Prostate gland (tissue), 2 donors: ENCODE measurements at regions of chr20 and their contacts with region 1.

Region 1: DNA sequence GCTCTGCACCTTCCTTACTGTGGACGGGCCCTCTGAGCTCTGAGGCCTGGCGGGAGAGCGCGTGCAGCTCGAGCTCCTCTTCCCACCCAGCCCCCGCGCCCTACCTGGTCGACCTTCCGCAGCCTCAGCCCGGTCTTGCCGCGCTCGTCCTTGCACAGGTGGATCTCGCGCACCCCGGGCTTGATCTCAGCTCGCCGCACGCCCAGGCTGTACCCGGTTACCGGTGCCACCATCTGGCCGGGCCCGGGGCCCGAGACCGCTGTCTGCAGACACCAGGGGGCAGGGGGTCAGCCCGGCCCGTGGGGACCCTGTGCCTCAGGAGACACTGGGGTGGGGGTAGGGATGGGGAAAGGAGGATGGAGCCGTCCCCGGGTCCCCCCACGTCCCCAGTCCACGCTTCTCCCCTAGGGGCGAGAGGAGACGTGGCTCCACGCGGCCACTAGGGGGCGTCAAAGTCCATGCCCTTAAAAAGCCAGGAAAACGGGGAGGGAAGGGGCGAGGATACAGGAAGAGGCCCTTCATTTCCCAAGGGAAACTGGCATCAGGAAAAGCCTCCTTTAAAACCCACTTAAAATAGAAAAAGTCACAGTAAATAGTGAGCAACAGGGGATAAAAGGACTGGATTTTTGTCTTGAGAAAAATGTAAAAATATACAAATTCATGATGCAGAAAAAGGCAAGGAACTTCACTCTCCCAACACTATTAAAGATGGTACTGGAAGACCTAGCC is 15.5 kb downstream of the SDCBP2 start:
- DNase-seq: peak; percentile 46
- H3K4me3 ChIP-seq: peak overlapping the region in 1 of 2 donors; percentile 13
- H3K27ac ChIP-seq: no peak overlapping the region
- H3K4me1 ChIP-seq: no peaks in the 10 kb centered on the region
- H3K27me3 ChIP-seq: no peaks in the 10 kb centered on the region
- CTCF ChIP-seq: peak; percentile 93 to 100 (median 96)
- POLR2A ChIP-seq: no peak

Region 2: GRCh38 chr20:1247689-1248088 is 65.7 kb before region 1 on chr20:
- intact Hi-C with region 1: no loop called
- DNase-seq: no peak
- H3K4me3 ChIP-seq: no peak overlapping the region
- H3K27ac ChIP-seq: no peak overlapping the region
- H3K4me1 ChIP-seq: no peaks in the 10 kb centered on the region
- H3K27me3 ChIP-seq: no peaks in the 10 kb centered on the region
- CTCF ChIP-seq: no peak
- POLR2A ChIP-seq: no peak

Region 3: GRCh38 chr20:1281279-1282057 is 31.9 kb before region 1 on chr20:
- intact Hi-C with region 1: no loop called
- DNase-seq: no peak
- H3K4me3 ChIP-seq: no peak overlapping the region
- H3K27ac ChIP-seq: no peak overlapping the region
- H3K4me1 ChIP-seq: peaks cover 3% of the 10 kb centered on the region
- H3K27me3 ChIP-seq: no peaks in the 10 kb centered on the region
- CTCF ChIP-seq: no peak
- POLR2A ChIP-seq: no peak

Region 4: DNA sequence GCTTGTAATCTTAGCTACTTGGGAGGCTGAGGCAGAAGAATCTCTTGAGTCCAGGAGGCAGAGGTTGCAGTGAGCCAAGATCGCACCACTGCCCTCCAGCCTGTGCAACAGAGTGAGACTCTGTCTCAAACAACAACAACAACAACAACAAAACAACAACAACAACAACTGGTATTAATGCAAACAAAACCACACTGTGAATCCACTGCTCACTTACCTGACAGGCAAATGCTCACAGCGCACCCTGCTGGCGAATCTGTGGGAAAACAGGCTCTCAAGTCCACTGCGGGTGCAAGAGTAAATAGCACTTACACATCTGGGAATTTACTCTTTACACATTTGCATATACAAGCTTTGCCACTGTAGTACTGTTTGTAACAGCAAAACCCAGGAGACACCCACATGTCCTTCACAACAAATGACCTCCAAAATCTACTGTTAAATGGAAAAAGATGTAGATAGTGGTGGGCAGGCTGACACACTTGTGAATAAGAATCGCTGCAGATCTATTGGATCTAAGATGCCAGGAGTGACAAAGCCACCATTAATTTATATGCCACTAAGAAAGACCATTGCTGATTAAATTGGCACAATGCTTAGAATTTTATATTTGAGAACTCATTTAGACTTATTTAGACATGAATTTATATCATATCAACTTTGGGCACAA is 124.0 kb after region 1 on chr20:
- intact Hi-C with region 1: loop called (anchors 2 kb)
- DNase-seq: peak; percentile 44
- H3K4me3 ChIP-seq: no peak overlapping the region
- H3K27ac ChIP-seq: no peak overlapping the region
- H3K4me1 ChIP-seq: no peaks in the 10 kb centered on the region
- H3K27me3 ChIP-seq: no peaks in the 10 kb centered on the region
- CTCF ChIP-seq: peak; percentile 41 to 84 (median 80)
- POLR2A ChIP-seq: no peak